Activated T-helper 2 cell treated with anti-CD3 and anti-CD28 coated beads, Interferon-gamma antibody, Interleukin-2, Interleukin-4, amounts not matched to agents 10 μg/mL and 5 μg/mL and 100 μg/mL, durations not matched to agents 14 hours and 24 hours and 36 hours (primary cell): ENCODE measurements at regions of chr10 and their contacts with region 1.

Region 1: GRCh38 chr10:96513698-96514561 is at the start of gene TLL2:
- DNase-seq: peak; percentile 63
- H3K4me3 Mint-ChIP-seq: peak within 1 kb of the TSS; percentile 66
- H3K27ac Mint-ChIP-seq: no peak within 1 kb of the TSS
- H3K4me1 Mint-ChIP-seq: peaks cover 10% of the 10 kb centered on the region
- H3K27me3 Mint-ChIP-seq: peaks cover 53% of the 10 kb centered on the region
- total RNA-seq, gene TLL2: 0.09 TPM in 1 of 2 replicates, not detected in the other

Region 2: DNA sequence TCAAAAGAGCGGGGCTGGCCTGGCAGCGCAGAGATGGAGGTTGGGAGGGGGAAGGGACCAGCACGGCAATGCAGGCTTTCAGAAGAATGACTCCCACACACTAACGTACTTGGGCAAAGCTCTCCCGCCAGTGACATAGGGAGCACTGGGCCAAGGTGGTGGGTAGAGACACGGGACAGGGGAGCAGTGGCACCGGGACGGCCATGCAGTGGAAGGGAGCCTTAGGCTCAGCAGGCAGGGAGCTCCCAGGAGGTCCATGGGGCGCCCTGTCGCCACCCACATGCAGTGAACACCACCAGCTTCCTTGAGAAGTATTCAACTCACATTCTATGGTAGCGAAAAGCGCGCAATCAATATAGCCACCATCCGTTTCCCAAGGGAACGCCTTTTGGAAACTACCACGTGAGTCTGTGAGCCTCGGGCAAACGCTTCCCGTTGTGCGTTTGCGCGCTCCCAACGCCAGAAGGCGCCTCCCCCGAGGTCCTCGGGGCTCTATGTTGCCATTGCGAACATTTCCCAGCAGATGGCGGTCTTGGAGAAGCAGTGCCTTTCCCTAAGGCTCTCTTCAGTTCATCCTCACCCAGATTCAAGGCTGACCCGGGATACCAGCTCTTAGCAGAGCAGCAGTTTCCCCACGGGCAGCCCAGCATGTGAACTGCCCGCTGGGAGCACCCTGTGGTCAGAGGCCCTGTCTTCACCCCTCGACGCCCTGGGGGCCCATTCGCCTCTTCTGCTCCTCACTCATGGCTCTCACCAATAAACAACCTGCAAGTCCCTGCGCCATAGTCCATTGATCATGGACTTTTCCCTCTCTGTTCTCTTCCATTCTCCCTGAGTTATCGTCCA is 138.7 kb before region 1 on chr10:
- intact Hi-C with region 1: loop called (anchors 1 kb)
- DNase-seq: peak; percentile 66
- H3K4me3 Mint-ChIP-seq: peak overlapping the region; percentile 69
- H3K27ac Mint-ChIP-seq: no peak overlapping the region
- H3K4me1 Mint-ChIP-seq: peaks cover 12% of the 10 kb centered on the region
- H3K27me3 Mint-ChIP-seq: peaks cover 11% of the 10 kb centered on the region

Region 3: GRCh38 chr10:96395931-96396877 is 117.7 kb before region 1 on chr10:
- intact Hi-C with region 1: loop called (anchors 2 kb)
- DNase-seq: peak; percentile 37
- H3K4me3 Mint-ChIP-seq: no peak overlapping the region
- H3K27ac Mint-ChIP-seq: no peak overlapping the region
- H3K4me1 Mint-ChIP-seq: peaks cover 6% of the 10 kb centered on the region
- H3K27me3 Mint-ChIP-seq: peaks cover 27% of the 10 kb centered on the region